ENCODE measurements at regions of chr18 and their contacts with region 1.

Region 1: GRCh38 chr18:59402432-59403090 is 43.5 kb upstream of the LMAN1 start:
- DNase-seq: peak; percentile 32 to 80
- ATAC-seq: peak; percentile 71 to 88 (median 73)
- H3K4me3 ChIP-seq: no peak overlapping the region
- H3K4me3 Mint-ChIP-seq: no peak overlapping the region
- H3K27ac ChIP-seq: no peak overlapping the region
- H3K27ac Mint-ChIP-seq: no peak overlapping the region
- H3K4me1 ChIP-seq: no peaks in the 10 kb centered on the region
- H3K4me1 Mint-ChIP-seq: no peaks in the 10 kb centered on the region
- H3K27me3 ChIP-seq: no peaks in the 10 kb centered on the region
- H3K27me3 Mint-ChIP-seq: peaks cover 0 to 3% of the 10 kb centered on the region in 2 donors
- CTCF ChIP-seq: peak; percentile 67

Region 2: GRCh38 chr18:58781627-58782194 is 620.9 kb before region 1 on chr18:
- intact Hi-C with region 1: loop called (anchors 5 kb)
- DNase-seq: peak; percentile 22 to 82
- ATAC-seq: peak; percentile 55 to 82 (median 73)
- H3K4me3 ChIP-seq: no peak overlapping the region
- H3K4me3 Mint-ChIP-seq: no peak overlapping the region
- H3K27ac ChIP-seq: no peak overlapping the region
- H3K27ac Mint-ChIP-seq: no peak overlapping the region
- H3K4me1 ChIP-seq: no peaks in the 10 kb centered on the region
- H3K4me1 Mint-ChIP-seq: no peaks in the 10 kb centered on the region
- H3K27me3 ChIP-seq: no peaks in the 10 kb centered on the region
- H3K27me3 Mint-ChIP-seq: peaks cover 0 to 7% of the 10 kb centered on the region in 2 donors
- CTCF ChIP-seq: peak; percentile 77

Region 3: DNA sequence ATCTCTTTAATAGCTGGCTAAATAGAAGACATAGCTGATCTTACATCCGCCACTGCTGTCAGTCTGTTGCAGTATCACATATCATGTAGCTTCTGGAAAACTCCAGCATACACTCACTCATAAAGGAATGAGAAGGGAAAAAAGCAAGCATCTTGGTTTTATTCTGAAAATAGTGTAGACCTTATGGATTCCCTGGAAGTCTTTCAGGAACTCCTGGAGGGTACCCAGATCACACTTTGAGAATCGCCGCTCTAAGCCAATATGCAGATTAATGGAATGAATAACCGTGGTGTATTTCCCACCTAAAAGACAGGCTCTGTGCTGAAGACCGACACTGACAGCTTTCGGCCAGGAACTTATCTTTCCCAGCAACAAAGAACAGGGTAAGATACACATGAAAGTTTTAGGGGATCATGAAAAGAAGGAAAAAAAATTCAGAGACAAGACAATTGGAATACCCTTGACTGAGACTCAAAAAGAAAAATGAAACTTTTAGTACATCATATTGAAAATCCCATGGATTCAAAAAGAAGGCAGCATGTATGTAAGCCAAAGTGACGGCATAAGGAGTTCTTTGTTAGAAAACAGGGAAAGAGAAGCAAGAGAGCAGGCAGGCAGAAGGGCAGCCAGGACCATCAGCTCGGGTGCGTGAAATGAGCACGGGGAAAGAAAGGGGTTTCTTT is 319.3 kb before region 1 on chr18:
- intact Hi-C with region 1: loop called (anchors 5 kb)
- DNase-seq: no peak
- ATAC-seq: no peak
- H3K4me3 ChIP-seq: no peak overlapping the region
- H3K4me3 Mint-ChIP-seq: no peak overlapping the region
- H3K27ac ChIP-seq: no peak overlapping the region
- H3K27ac Mint-ChIP-seq: no peak overlapping the region
- H3K4me1 ChIP-seq: peaks cover 4% of the 10 kb centered on the region
- H3K4me1 Mint-ChIP-seq: peaks cover 5% of the 10 kb centered on the region in 2 donors
- H3K27me3 ChIP-seq: no peaks in the 10 kb centered on the region
- H3K27me3 Mint-ChIP-seq: peaks cover 10 to 26% of the 10 kb centered on the region in 2 donors
- CTCF ChIP-seq: no peak

Region 4: GRCh38 chr18:59249205-59249774 is 153.3 kb before region 1 on chr18:
- intact Hi-C with region 1: loop called (anchors 5 kb)
- DNase-seq: peak in 1 of 2 donors; percentile 54
- ATAC-seq: no peak
- H3K4me3 ChIP-seq: no peak overlapping the region
- H3K4me3 Mint-ChIP-seq: no peak overlapping the region
- H3K27ac ChIP-seq: no peak overlapping the region
- H3K27ac Mint-ChIP-seq: no peak overlapping the region
- H3K4me1 ChIP-seq: no peaks in the 10 kb centered on the region
- H3K4me1 Mint-ChIP-seq: no peaks in the 10 kb centered on the region
- H3K27me3 ChIP-seq: peaks cover 2% of the 10 kb centered on the region
- H3K27me3 Mint-ChIP-seq: peaks cover 12 to 13% of the 10 kb centered on the region in 2 donors
- CTCF ChIP-seq: peak; percentile 15

Region 5: GRCh38 chr18:59308248-59308937 is 94.2 kb before region 1 on chr18:
- intact Hi-C with region 1: loop called (anchors 5 kb)
- DNase-seq: peak; percentile 40 to 73
- ATAC-seq: peak; percentile 66 to 91 (median 68)
- H3K4me3 ChIP-seq: no peak overlapping the region
- H3K4me3 Mint-ChIP-seq: peak overlapping the region; percentile 35
- H3K27ac ChIP-seq: no peak overlapping the region
- H3K27ac Mint-ChIP-seq: no peak overlapping the region
- H3K4me1 ChIP-seq: peaks cover 5% of the 10 kb centered on the region
- H3K4me1 Mint-ChIP-seq: no peaks in the 10 kb centered on the region
- H3K27me3 ChIP-seq: peaks cover 12% of the 10 kb centered on the region
- H3K27me3 Mint-ChIP-seq: peaks cover 20 to 49% of the 10 kb centered on the region in 2 donors
- CTCF ChIP-seq: peak; percentile 61

Region 6: DNA sequence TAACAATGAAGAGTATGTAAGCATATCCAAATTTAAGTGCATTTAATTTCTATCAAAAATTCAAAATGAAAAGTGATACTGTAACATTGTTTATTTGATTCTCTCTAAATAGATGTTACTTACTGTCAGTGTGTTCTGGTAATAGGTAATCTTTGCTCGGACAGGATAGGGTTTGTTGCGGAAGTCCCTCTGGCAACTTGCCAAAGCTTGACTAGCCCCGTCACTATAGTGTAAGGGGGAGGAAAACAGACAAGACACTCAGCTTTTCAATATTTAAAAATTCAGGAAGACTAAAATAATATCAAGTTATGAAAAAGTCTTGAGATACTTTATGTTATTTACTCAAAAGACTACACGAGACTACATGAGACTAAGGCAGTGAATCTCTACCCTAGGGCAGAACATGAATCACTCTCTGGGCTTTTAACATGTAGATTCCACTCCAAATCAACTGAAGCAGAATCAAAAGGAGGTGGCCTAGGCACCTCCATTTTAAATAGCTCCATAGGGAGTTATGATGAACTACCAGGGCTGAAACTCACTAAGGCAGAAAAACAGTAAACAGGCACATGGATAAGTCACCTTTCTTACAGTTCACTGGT is 49.4 kb before region 1 on chr18:
- intact Hi-C with region 1: no loop called
- DNase-seq: no peak
- ATAC-seq: no peak
- H3K4me3 ChIP-seq: no peak overlapping the region
- H3K4me3 Mint-ChIP-seq: no peak overlapping the region
- H3K27ac ChIP-seq: no peak overlapping the region
- H3K27ac Mint-ChIP-seq: no peak overlapping the region
- H3K4me1 ChIP-seq: no peaks in the 10 kb centered on the region
- H3K4me1 Mint-ChIP-seq: peaks cover 16 to 19% of the 10 kb centered on the region in 2 donors
- H3K27me3 ChIP-seq: no peaks in the 10 kb centered on the region
- H3K27me3 Mint-ChIP-seq: no peaks in the 10 kb centered on the region
- CTCF ChIP-seq: no peak

Measured in natural killer cell (primary cell).